ENCODE measurements at regions of chr1 and their contacts with region 1.

Region 1: DNA sequence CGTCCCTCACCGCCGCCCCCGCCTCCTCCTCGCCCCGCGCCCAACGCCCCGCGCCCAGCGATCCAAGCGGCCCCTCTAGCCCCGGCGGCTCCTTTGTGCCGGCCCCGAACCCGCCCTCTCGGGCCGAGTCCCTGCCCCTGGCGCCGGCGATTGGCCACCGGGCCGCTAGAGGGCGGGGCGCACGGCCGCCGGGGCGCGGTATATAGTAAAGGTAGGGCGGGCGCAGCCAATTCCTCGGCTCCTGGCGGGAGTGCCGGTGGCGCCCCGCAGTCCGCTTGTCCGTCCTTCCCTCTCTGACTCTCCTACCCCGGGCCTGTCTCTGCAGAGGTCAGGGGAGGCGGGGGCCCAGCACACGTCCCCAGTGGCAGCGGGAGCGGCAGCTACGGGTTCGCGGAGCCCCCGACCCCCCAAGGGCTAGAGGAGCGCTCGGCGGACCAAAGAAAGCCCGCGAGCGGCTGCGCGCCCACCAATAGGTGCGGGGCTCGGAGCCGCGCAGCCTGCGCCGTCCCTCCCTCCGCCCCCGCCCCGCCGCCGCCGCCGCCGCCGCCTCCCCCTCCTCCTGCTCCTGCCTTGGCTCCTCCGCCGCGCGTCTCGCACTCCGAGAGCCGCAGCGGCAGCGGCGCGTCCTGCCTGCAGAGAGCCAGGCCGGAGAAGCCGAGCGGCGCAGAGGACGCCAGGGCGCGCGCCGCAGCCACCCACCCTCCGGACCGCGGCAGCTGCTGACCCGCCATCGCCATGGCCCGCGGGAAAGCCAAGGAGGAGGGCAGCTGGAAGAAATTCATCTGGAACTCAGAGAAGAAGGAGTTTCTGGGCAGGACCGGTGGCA is at the start of gene ATP1B1:
- DNase-seq: peak; percentile 94
- H3K4me3 ChIP-seq: peak within 1 kb of the TSS; percentile 81 to 92 (median 87)
- H3K27ac ChIP-seq: peak within 1 kb of the TSS; percentile 94 to 98 (median 96)
- H3K4me1 ChIP-seq: peaks cover 2 to 59% (median 35%) of the 10 kb centered on the region in 4 donors
- H3K27me3 ChIP-seq: no peaks in the 10 kb centered on the region
- CTCF ChIP-seq: peak; percentile 53 to 72 (median 58)
- EP300 ChIP-seq: no peak
- POLR2A ChIP-seq: peak; percentile 100
- total RNA-seq, gene ATP1B1: 82.8 to 493 (median 375) TPM

Region 2: GRCh38 chr1:168466092-168466713 is 640.1 kb before region 1 on chr1:
- in situ Hi-C with region 1: loop called in 1 of 4 experiments (anchors 25 kb)
- intact Hi-C with region 1: no loop called
- DNase-seq: peak; percentile 64
- H3K4me3 ChIP-seq: no peak overlapping the region
- H3K27ac ChIP-seq: peak overlapping the region; percentile 34 to 65 (median 52)
- H3K4me1 ChIP-seq: peaks cover 27 to 55% (median 35%) of the 10 kb centered on the region in 4 donors
- H3K27me3 ChIP-seq: no peaks in the 10 kb centered on the region
- CTCF ChIP-seq: no peak
- EP300 ChIP-seq: no peak
- POLR2A ChIP-seq: no peak

Region 3: DNA sequence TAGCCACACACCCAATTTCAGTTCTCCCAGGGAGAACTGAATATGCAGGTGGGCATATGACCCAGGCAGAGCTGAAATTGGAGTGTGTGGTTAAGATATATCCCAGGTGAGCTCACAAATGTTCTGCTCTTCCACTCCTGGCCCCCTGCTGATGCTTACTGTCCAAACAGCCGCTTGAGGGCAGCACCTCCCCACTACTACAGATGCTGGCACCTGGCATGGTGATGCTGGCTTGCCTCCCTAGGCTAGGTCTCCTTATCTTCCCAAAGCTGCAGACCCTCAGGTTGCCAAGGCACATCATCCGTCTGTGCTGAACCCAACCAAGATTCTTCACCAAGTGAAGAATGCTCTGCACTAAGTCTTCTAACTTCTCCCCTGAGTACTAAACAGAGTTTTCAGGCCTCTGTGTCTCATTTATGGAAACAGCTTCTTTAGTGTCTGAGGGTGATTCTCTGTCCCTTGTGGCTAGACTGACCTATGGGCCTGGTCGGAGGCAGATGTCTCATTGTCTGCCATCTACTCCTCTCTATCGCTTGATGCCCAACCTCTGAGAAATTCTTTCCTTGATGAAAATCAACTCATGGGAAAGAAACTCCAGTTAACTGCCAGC is 502.7 kb before region 1 on chr1:
- in situ Hi-C with region 1: loop called in 1 of 4 experiments (anchors 25 kb)
- intact Hi-C with region 1: no loop called
- DNase-seq: peak; percentile 82
- H3K4me3 ChIP-seq: no peak overlapping the region
- H3K27ac ChIP-seq: no peak overlapping the region
- H3K4me1 ChIP-seq: peaks cover 0 to 11% (median 1%) of the 10 kb centered on the region in 4 donors
- H3K27me3 ChIP-seq: no peaks in the 10 kb centered on the region
- CTCF ChIP-seq: peak; percentile 77 to 83 (median 81)
- EP300 ChIP-seq: no peak
- POLR2A ChIP-seq: no peak

Region 4: GRCh38 chr1:168617974-168618750 is 488.1 kb before region 1 on chr1:
- in situ Hi-C with region 1: loop called in 1 of 4 experiments (anchors 25 kb)
- intact Hi-C with region 1: loop called (anchors 5 kb)
- DNase-seq: no peak
- H3K4me3 ChIP-seq: no peak overlapping the region
- H3K27ac ChIP-seq: no peak overlapping the region
- H3K4me1 ChIP-seq: peaks cover 0 to 11% (median 5%) of the 10 kb centered on the region in 4 donors
- H3K27me3 ChIP-seq: no peaks in the 10 kb centered on the region
- CTCF ChIP-seq: no peak
- EP300 ChIP-seq: no peak
- POLR2A ChIP-seq: no peak

Region 5: GRCh38 chr1:168987332-168987731 is 119.0 kb before region 1 on chr1:
- in situ Hi-C with region 1: no loop called
- intact Hi-C with region 1: no loop called
- DNase-seq: no peak
- H3K4me3 ChIP-seq: no peak overlapping the region
- H3K27ac ChIP-seq: no peak overlapping the region
- H3K4me1 ChIP-seq: no peaks in the 10 kb centered on the region
- H3K27me3 ChIP-seq: no peaks in the 10 kb centered on the region
- CTCF ChIP-seq: no peak
- EP300 ChIP-seq: no peak
- POLR2A ChIP-seq: no peak

Region 6: DNA sequence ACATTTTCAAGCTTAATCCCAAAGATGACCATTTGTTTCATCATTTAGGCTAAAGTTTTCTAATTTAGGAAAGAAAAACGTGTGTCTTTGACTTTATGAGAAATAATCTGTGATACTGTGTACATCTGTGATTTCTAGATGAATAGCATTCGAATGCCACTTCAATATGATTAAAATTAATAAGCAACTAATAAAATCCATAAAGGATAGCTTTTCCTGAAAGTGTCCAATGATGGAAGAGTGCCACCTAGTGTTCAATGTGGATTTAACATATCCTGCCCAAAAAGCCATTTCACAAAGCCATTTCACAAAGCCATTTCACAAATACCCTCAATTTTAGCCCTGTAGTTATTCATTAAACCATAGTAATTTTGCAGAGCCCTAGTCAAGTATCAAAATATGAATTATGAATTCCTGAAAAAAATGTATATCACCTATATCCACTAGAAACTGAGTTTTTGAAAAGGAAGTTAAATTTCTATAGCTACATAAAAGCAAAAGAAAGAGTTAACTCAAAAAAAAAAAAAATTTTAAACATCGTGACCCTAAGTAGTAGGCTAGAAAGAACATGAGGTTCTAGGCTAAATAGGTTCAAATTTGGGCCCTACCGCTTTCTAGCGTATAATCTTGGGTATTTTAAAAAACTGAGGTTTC is 242.2 kb after region 1 on chr1:
- in situ Hi-C with region 1: loop called in 1 of 4 experiments (anchors 25 kb)
- intact Hi-C with region 1: no loop called
- DNase-seq: no peak
- H3K4me3 ChIP-seq: no peak overlapping the region
- H3K27ac ChIP-seq: no peak overlapping the region
- H3K4me1 ChIP-seq: peaks cover 0 to 2% (median 0%) of the 10 kb centered on the region in 4 donors
- H3K27me3 ChIP-seq: no peaks in the 10 kb centered on the region
- CTCF ChIP-seq: peak; percentile 76 to 91 (median 84)
- EP300 ChIP-seq: no peak
- POLR2A ChIP-seq: no peak